ENCODE measurements at regions of chr9 and their contacts with region 1.

Region 1: GRCh38 chr9:36407122-36407723 is 7.2 kb upstream of the RNF38 start:
- DNase-seq: peak; percentile 64
- H3K4me3 ChIP-seq: peak overlapping the region in 1 of 2 experiments; percentile 20; a peak in 1 of 4 replicates
- H3K27ac ChIP-seq: peak overlapping the region in 1 of 2 experiments; percentile 55; a peak in 2 of 4 replicates
- H3K4me1 ChIP-seq: peaks cover 0 to 5% of the 10 kb centered on the region in 2 experiments; a peak in 1 of 4 replicates
- H3K27me3 ChIP-seq: no peaks in the 10 kb centered on the region
- CTCF ChIP-seq: peak; percentile 93
- EP300 ChIP-seq: no peak
- RAD21 ChIP-seq: peak; percentile 93

Region 2: DNA sequence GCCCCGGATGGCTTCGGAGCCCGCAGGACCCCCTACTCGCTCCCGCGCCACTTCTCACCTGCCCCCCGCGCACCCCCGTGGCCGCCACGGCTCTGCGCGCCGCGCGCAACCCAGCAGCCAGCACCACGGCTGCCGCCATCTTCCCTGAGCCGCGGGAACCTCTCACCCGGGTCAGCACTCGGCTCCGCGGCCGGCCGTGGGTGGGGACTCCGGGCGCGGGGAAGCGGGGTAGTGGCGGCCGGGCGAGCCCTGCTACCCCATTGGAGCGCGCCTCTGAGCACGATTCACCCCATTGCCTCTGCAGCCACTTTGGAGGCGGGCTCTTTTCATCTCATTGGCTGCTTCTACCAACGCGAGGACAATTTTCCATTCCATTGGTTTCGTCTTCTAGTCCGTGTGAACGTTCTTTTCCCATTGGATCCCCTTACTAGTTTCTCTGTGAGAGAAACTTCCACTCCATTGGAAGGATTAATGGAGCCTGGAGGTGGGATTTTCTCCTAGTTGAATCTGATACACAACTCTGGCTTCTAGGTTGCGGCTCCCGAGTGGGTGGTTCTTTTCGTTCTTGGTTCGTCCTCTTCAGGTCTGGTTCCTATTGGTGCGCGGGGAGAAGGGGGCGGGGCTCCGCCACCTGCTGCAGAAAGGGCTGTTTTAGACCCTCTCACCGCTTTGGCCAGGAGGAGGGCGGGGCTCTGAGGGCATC is 592.2 kb before region 1 on chr9 and contains the start of gene HINT2:
- CTCF ChIA-PET with region 1: no interaction called
- POLR2A ChIA-PET with region 1: no interaction called
- DNase-seq: peak; percentile 95
- H3K4me3 ChIP-seq: peak within 1 kb of the TSS; percentile 81 to 92
- H3K27ac ChIP-seq: peak within 1 kb of the TSS; percentile 77 to 96
- H3K4me1 ChIP-seq: peaks cover 7 to 30% of the 10 kb centered on the region in 2 experiments; a peak in 3 of 4 replicates
- H3K27me3 ChIP-seq: no peaks in the 10 kb centered on the region
- CTCF ChIP-seq: no peak
- EP300 ChIP-seq: no peak
- RAD21 ChIP-seq: no peak
- polyA plus RNA-seq, gene HINT2: 39.9 and 57.2 TPM in 2 replicates

Region 3: DNA sequence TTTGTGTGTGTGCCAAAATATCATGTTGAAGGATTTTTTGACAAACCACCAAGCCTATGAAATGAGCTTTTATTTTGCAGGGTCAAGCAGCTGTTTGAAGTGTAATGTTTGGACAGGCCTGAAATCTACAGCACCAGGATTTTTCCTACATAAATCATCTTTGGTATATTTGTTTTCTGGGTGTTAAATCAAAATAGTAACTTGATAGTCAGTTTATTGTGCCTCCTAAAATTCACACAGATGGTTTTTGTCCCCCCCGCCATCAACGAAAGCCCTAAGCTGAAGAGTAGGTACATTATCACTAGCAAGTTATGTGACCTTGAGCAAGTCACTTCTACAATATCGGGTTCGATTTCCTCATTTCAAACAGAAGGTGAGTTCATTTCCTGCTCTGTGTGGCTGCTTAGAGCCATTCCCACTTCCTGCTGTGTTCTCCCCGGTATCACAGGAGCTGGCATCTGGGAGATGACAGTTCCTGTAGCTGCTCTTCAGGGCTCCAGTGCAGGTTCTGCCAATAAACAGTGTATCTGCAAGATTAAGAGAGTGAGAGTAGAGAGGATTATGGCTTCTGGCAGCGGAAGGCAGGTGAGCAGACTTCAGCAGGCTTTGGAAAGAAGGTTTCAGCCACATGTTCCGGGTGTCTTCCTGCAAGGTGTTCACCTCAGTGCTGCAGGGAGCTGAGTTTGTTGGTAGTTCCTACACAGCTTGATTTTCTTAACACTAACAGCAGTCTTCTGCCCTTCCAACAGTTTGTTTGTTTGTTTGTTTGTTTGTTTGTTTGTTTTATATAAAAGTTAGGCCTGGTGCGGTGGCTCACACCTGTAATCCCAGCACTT is 100.5 kb before region 1 on chr9:
- CTCF ChIA-PET with region 1: no interaction called
- POLR2A ChIA-PET with region 1: no interaction called
- DNase-seq: no peak
- H3K4me3 ChIP-seq: no peak overlapping the region
- H3K27ac ChIP-seq: no peak overlapping the region
- H3K4me1 ChIP-seq: no peaks in the 10 kb centered on the region
- H3K27me3 ChIP-seq: no peaks in the 10 kb centered on the region
- CTCF ChIP-seq: no peak
- EP300 ChIP-seq: no peak
- RAD21 ChIP-seq: no peak

Region 4: GRCh38 chr9:36436909-36437308 is 29.7 kb after region 1 on chr9:
- CTCF ChIA-PET with region 1: interaction called, 55 read pairs
- POLR2A ChIA-PET with region 1: no interaction called
- DNase-seq: no peak
- H3K4me3 ChIP-seq: no peak overlapping the region
- H3K27ac ChIP-seq: no peak overlapping the region; a peak in 1 of 4 replicates
- H3K4me1 ChIP-seq: peaks cover under 1 to 2% of the 10 kb centered on the region in 2 experiments; a peak in 2 of 4 replicates
- H3K27me3 ChIP-seq: no peaks in the 10 kb centered on the region
- CTCF ChIP-seq: no peak
- EP300 ChIP-seq: no peak
- RAD21 ChIP-seq: no peak

Region 5: DNA sequence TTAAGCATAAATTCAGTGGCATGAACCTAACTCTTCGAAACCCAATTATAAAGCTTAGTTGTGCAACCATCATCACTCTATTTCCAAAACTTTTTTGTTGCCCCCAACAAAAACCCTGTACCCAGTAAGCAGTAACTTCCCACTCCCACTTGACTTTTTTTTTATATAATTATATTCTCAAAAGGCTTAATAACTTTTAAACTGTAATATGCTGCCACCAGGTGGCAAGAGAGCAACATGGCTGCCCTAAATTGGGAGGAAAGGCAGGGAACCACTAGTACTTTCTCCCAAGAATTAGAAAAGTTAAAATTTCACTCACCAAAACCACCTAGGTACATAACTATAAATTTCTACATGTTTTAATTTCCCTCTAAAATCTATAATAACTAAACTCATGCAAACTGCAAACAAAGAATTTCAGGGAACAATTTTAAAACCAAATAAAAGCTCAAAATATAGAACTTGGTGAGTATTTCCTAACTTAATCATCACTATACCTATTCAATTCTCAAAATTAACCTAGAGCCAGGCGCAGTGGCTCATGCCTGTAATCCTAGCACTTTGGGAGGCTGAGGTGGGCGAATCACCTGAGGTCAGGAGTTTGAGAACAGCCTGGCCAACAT is 43.0 kb after region 1 on chr9:
- CTCF ChIA-PET with region 1: interaction called, 135 read pairs
- POLR2A ChIA-PET with region 1: interaction called, 3 read pairs
- DNase-seq: peak; percentile 53
- H3K4me3 ChIP-seq: no peak overlapping the region
- H3K27ac ChIP-seq: no peak overlapping the region
- H3K4me1 ChIP-seq: no peaks in the 10 kb centered on the region
- H3K27me3 ChIP-seq: no peaks in the 10 kb centered on the region
- CTCF ChIP-seq: peak; percentile 90
- EP300 ChIP-seq: no peak
- RAD21 ChIP-seq: peak; percentile 83

Region 6: DNA sequence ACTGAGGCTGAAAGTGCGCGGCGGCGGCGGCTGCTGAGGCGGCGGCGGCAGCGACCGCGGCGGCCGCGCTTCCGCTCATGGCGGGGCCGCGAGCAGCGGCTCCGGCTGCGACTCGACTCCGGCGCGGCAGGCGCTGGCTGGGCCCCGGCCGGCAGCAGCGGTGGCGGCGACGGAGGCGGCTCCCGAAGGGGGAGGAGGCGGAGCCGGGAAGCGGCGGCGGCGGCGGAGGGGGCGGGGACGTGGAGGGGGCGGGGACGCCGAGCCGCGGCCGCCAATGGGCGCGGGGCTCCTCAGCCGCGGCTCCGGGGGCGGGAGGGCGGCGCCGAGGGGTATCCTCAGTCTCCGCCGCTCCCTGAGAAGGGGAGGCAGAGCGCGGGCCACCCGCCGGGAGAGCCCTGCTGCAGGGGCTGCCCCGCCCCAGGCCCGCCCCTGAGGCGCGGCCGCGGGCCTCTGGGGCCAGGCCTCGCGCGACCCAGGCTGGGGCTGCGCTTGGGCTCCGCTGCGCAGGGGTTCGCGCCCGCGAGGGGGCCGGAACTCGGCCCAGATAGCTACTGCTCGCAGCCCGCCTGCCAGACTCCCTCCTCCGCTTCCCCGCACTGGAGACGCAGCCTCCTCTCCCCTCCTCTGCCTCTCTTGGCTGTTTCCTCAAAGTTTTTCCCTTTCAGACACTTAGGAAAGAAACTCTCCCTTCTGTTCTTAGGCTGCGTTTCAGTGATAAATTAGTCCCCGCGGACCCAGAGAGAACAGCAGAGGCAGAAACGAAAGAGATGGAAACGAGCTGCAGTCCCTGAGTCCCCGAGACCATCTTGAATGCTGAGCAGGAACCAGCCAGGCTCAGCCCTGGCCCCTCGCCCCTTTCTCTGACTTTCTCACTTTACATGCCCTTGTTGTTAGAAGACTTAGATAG is 80.5 kb after region 1 on chr9:
- CTCF ChIA-PET with region 1: interaction called, 19 read pairs
- POLR2A ChIA-PET with region 1: no interaction called
- DNase-seq: peak; percentile 96
- H3K4me3 ChIP-seq: peak overlapping the region; percentile 62 to 96
- H3K27ac ChIP-seq: peak overlapping the region; percentile 88 to 91
- H3K4me1 ChIP-seq: peaks cover 12 to 16% of the 10 kb centered on the region in 2 experiments; a peak in 3 of 4 replicates
- H3K27me3 ChIP-seq: no peaks in the 10 kb centered on the region
- CTCF ChIP-seq: no peak
- EP300 ChIP-seq: no peak
- RAD21 ChIP-seq: no peak

Region 7: GRCh38 chr9:36560857-36561221 is 153.6 kb after region 1 on chr9:
- CTCF ChIA-PET with region 1: interaction called, 181 read pairs
- POLR2A ChIA-PET with region 1: no interaction called
- DNase-seq: no peak
- H3K4me3 ChIP-seq: no peak overlapping the region
- H3K27ac ChIP-seq: no peak overlapping the region
- H3K4me1 ChIP-seq: no peaks in the 10 kb centered on the region
- H3K27me3 ChIP-seq: no peaks in the 10 kb centered on the region
- CTCF ChIP-seq: no peak
- EP300 ChIP-seq: no peak
- RAD21 ChIP-seq: no peak

Region 8: GRCh38 chr9:36728651-36729520 is 321.7 kb after region 1 on chr9:
- CTCF ChIA-PET with region 1: interaction called, 28 read pairs
- POLR2A ChIA-PET with region 1: no interaction called
- DNase-seq: peak; percentile 83
- H3K4me3 ChIP-seq: peak overlapping the region in 1 of 2 experiments; percentile 29; a peak in 1 of 4 replicates
- H3K27ac ChIP-seq: no peak overlapping the region
- H3K4me1 ChIP-seq: no peaks in the 10 kb centered on the region
- H3K27me3 ChIP-seq: no peaks in the 10 kb centered on the region
- CTCF ChIP-seq: peak; percentile 85
- EP300 ChIP-seq: no peak
- RAD21 ChIP-seq: peak; percentile 94